IMR-90 (cell line): ENCODE measurements at regions of chr15 and their contacts with region 1.

Region 1: GRCh38 chr15:60326824-60327654 is 70.7 kb downstream of the ANXA2 start:
- DNase-seq: peak; percentile 52
- ATAC-seq: peak; percentile 81
- H3K4me3 ChIP-seq: no peak overlapping the region
- H3K27ac ChIP-seq: no peak overlapping the region
- H3K4me1 ChIP-seq: no peaks in the 10 kb centered on the region
- H3K27me3 ChIP-seq: peaks cover 39% of the 10 kb centered on the region
- CTCF ChIP-seq: peak; percentile 91
- POLR2A ChIP-seq: no peak
- RAD21 ChIP-seq: peak; percentile 86

Region 2: DNA sequence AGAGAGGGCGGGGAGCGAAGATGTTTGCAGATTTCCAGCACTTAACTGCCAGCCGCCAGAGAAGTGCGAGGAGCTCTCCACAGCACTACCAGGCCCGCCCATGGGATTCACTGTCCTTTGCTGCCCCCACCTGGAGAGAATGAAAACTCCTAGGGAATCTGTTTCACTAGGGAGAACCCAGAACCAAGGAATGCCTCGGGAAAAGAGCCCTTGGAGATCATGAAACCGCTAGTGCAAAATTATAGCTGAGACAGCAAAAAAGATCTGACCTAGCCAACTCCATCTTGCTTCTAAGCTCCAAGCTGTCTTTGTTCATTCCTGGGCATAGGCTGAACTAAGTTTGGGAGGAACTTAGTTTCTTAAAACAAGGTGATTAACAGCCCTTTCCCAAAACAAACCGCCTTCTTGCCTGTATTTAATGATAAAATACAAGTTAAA is 798.1 kb before region 1 on chr15:
- CTCF ChIA-PET with region 1: interaction called, 3 read pairs
- POLR2A ChIA-PET with region 1: no interaction called
- dilution Hi-C with region 1: no loop called
- in situ Hi-C with region 1: no loop called
- intact Hi-C with region 1: loop called (anchors 10 kb)
- DNase-seq: peak; percentile 81
- ATAC-seq: peak; percentile 100
- H3K4me3 ChIP-seq: no peak overlapping the region
- H3K27ac ChIP-seq: no peak overlapping the region
- H3K4me1 ChIP-seq: no peaks in the 10 kb centered on the region
- H3K27me3 ChIP-seq: peaks cover 8% of the 10 kb centered on the region
- CTCF ChIP-seq: peak; percentile 88
- POLR2A ChIP-seq: no peak
- RAD21 ChIP-seq: peak; percentile 88

Region 3: GRCh38 chr15:59725172-59725486 is 601.9 kb before region 1 on chr15:
- CTCF ChIA-PET with region 1: interaction called, 16 read pairs
- POLR2A ChIA-PET with region 1: no interaction called
- dilution Hi-C with region 1: no loop called
- in situ Hi-C with region 1: loop called (anchors 10 kb)
- intact Hi-C with region 1: loop called (anchors 1 kb)
- DNase-seq: no peak
- ATAC-seq: no peak
- H3K4me3 ChIP-seq: no peak overlapping the region
- H3K27ac ChIP-seq: no peak overlapping the region
- H3K4me1 ChIP-seq: no peaks in the 10 kb centered on the region
- H3K27me3 ChIP-seq: peaks cover 24% of the 10 kb centered on the region
- CTCF ChIP-seq: no peak
- POLR2A ChIP-seq: no peak
- RAD21 ChIP-seq: no peak

Region 4: GRCh38 chr15:60444289-60444912 is 117.4 kb after region 1 on chr15:
- CTCF ChIA-PET with region 1: interaction called, 7 read pairs
- POLR2A ChIA-PET with region 1: no interaction called
- dilution Hi-C with region 1: no loop called
- in situ Hi-C with region 1: no loop called
- intact Hi-C with region 1: loop called (anchors 1 kb)
- DNase-seq: peak; percentile 51
- ATAC-seq: peak; percentile 59
- H3K4me3 ChIP-seq: no peak overlapping the region
- H3K27ac ChIP-seq: no peak overlapping the region
- H3K4me1 ChIP-seq: peaks cover 2% of the 10 kb centered on the region
- H3K27me3 ChIP-seq: no peaks in the 10 kb centered on the region
- CTCF ChIP-seq: peak; percentile 76
- POLR2A ChIP-seq: no peak
- RAD21 ChIP-seq: peak; percentile 76

Region 5: GRCh38 chr15:61834076-61834697 is 1507.1 kb after region 1 on chr15:
- CTCF ChIA-PET with region 1: no interaction called
- POLR2A ChIA-PET with region 1: no interaction called
- dilution Hi-C with region 1: no loop called
- in situ Hi-C with region 1: loop called (anchors 25 kb)
- intact Hi-C with region 1: no loop called
- DNase-seq: peak; percentile 72
- ATAC-seq: peak; percentile 89
- H3K4me3 ChIP-seq: no peak overlapping the region
- H3K27ac ChIP-seq: no peak overlapping the region
- H3K4me1 ChIP-seq: no peaks in the 10 kb centered on the region
- H3K27me3 ChIP-seq: peaks cover 14% of the 10 kb centered on the region
- CTCF ChIP-seq: peak; percentile 92
- POLR2A ChIP-seq: no peak
- RAD21 ChIP-seq: peak; percentile 78